ENCODE measurements at regions of chr3 and their contacts with region 1.

Region 1: GRCh38 chr3:187025656-187026316 is 95.5 kb downstream of the ST6GAL1 start:
- DNase-seq: peak; percentile 64
- ATAC-seq: peak; percentile 36
- H3K4me3 Mint-ChIP-seq: peak overlapping the region; percentile 85
- H3K27ac Mint-ChIP-seq: peak overlapping the region; percentile 97
- H3K4me1 Mint-ChIP-seq: peaks cover 49% of the 10 kb centered on the region
- H3K27me3 Mint-ChIP-seq: no peaks in the 10 kb centered on the region

Region 2: GRCh38 chr3:185595526-185595925 is 1430.3 kb before region 1 on chr3:
- CTCF ChIA-PET with region 1: no interaction called
- POLR2A ChIA-PET with region 1: no interaction called
- intact Hi-C with region 1: no loop called
- DNase-seq: no peak
- ATAC-seq: no peak
- H3K4me3 Mint-ChIP-seq: no peak overlapping the region
- H3K27ac Mint-ChIP-seq: peak overlapping the region; percentile 45
- H3K4me1 Mint-ChIP-seq: peaks cover 8% of the 10 kb centered on the region
- H3K27me3 Mint-ChIP-seq: no peaks in the 10 kb centered on the region

Region 3: DNA sequence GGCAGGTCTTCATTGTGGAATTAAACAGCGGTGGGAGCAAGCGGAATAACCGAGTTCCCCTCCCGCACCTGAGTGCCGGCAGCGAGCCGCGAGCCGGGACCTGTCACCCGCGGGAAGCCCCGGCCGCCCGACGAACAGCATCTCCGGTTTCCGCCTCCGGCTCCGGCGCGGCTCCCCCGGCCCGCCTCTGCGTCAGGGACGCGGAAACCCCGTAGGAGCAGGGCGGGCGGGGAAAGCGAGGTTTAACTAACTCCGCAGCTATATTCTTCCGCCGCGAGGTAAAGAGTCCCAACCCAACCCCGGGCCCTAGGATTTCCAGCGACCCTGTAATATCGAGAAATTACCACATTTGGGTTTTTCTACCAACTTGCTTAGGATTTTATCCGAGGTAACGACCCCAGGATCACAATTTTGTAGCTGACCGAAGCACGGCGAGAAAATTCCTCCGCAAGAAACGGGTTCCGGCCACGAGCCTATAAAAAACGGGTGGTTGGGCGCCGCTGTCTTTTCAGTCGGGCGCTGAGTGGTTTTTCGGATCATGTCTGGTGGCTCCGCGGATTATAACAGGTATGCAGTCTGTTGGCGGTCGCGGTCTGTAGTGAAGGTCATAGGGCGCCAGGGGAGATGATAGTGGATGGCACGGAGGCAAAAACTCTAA is 242.6 kb before region 1 on chr3 and contains the start of gene EIF4A2:
- CTCF ChIA-PET with region 1: no interaction called
- POLR2A ChIA-PET with region 1: no interaction called
- intact Hi-C with region 1: loop called in 1 of 2 experiments (anchors 5 kb)
- DNase-seq: peak; percentile 95
- ATAC-seq: peak; percentile 69
- H3K4me3 Mint-ChIP-seq: peak within 1 kb of the TSS; percentile 100
- H3K27ac Mint-ChIP-seq: peak within 1 kb of the TSS; percentile 100
- H3K4me1 Mint-ChIP-seq: peaks cover 32% of the 10 kb centered on the region
- H3K27me3 Mint-ChIP-seq: no peaks in the 10 kb centered on the region
- total RNA-seq, gene EIF4A2: 291 to 390 TPM

Region 4: DNA sequence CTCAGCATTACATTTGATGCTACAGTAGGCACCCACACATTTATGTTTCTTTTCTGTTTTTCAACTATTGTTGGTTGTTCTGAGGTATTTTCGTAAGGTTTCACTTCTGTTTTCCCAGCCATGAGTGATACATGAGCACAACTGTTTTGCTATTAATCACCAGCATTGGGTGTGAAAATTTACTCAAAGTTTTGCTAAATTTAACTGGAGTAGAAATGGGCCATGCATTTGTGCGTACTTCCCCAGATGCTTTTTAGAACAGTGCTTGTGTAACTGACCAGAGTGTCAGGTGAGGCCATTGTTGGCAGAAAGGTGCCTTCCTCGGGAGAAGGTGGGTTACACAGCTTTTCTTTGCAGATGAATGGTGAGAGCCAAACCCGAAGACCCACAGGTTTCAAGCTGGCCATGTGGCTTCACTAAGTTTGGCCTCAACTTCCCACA is 25.1 kb before region 1 on chr3:
- CTCF ChIA-PET with region 1: interaction called, 4 read pairs
- POLR2A ChIA-PET with region 1: interaction called, 3 read pairs
- intact Hi-C with region 1: loop called (anchors 1 kb)
- DNase-seq: peak; percentile 54
- ATAC-seq: peak; percentile 92
- H3K4me3 Mint-ChIP-seq: peak overlapping the region; percentile 27
- H3K27ac Mint-ChIP-seq: peak overlapping the region; percentile 89
- H3K4me1 Mint-ChIP-seq: peaks cover 66% of the 10 kb centered on the region
- H3K27me3 Mint-ChIP-seq: no peaks in the 10 kb centered on the region

Region 5: GRCh38 chr3:187041362-187042307 is 15.8 kb after region 1 on chr3:
- CTCF ChIA-PET with region 1: interaction called, 9 read pairs
- POLR2A ChIA-PET with region 1: interaction called, 5 read pairs
- intact Hi-C with region 1: loop called (anchors 1 kb)
- DNase-seq: peak; percentile 61
- ATAC-seq: peak; percentile 92
- H3K4me3 Mint-ChIP-seq: peak overlapping the region; percentile 40
- H3K27ac Mint-ChIP-seq: peak overlapping the region; percentile 95
- H3K4me1 Mint-ChIP-seq: peaks cover 81% of the 10 kb centered on the region
- H3K27me3 Mint-ChIP-seq: no peaks in the 10 kb centered on the region

Region 6: GRCh38 chr3:187130346-187131066 is 104.7 kb after region 1 on chr3:
- CTCF ChIA-PET with region 1: no interaction called
- POLR2A ChIA-PET with region 1: no interaction called
- intact Hi-C with region 1: loop called (anchors 2 to 5 kb)
- DNase-seq: peak; percentile 63
- ATAC-seq: peak; percentile 92
- H3K4me3 Mint-ChIP-seq: peak overlapping the region; percentile 55
- H3K27ac Mint-ChIP-seq: peak overlapping the region; percentile 98
- H3K4me1 Mint-ChIP-seq: peaks cover 35% of the 10 kb centered on the region
- H3K27me3 Mint-ChIP-seq: no peaks in the 10 kb centered on the region

Region 7: GRCh38 chr3:187172929-187173328 is 147.1 kb after region 1 on chr3:
- CTCF ChIA-PET with region 1: no interaction called
- POLR2A ChIA-PET with region 1: no interaction called
- intact Hi-C with region 1: no loop called
- DNase-seq: no peak
- ATAC-seq: no peak
- H3K4me3 Mint-ChIP-seq: no peak overlapping the region
- H3K27ac Mint-ChIP-seq: no peak overlapping the region
- H3K4me1 Mint-ChIP-seq: peaks cover 8% of the 10 kb centered on the region
- H3K27me3 Mint-ChIP-seq: no peaks in the 10 kb centered on the region